ENCODE measurements at regions of chr10 and their contacts with region 1.

Region 1: GRCh38 chr10:43204943-43205671 is 61.8 kb downstream of the RASGEF1A start:
- DNase-seq: no peak
- H3K4me3 ChIP-seq: no peak overlapping the region
- CTCF ChIP-seq: peak; percentile 86

Region 2: GRCh38 chr10:42960491-42960990 is 244.6 kb before region 1 on chr10:
- CTCF ChIA-PET with region 1: no interaction called
- POLR2A ChIA-PET with region 1: no interaction called
- DNase-seq: no peak
- H3K4me3 ChIP-seq: no peak overlapping the region
- CTCF ChIP-seq: no peak

Region 3: GRCh38 chr10:43190775-43191174 is 14.3 kb before region 1 on chr10:
- CTCF ChIA-PET with region 1: interaction called, 83 read pairs
- POLR2A ChIA-PET with region 1: no interaction called
- DNase-seq: no peak
- H3K4me3 ChIP-seq: no peak overlapping the region
- CTCF ChIP-seq: no peak

Region 4: GRCh38 chr10:43225784-43226148 is 20.7 kb after region 1 on chr10:
- CTCF ChIA-PET with region 1: interaction called, 12 read pairs
- POLR2A ChIA-PET with region 1: no interaction called
- DNase-seq: no peak
- H3K4me3 ChIP-seq: no peak overlapping the region
- CTCF ChIP-seq: no peak

Region 5: GRCh38 chr10:43594944-43595589 is 390.0 kb after region 1 on chr10:
- CTCF ChIA-PET with region 1: no interaction called
- POLR2A ChIA-PET with region 1: no interaction called
- DNase-seq: no peak
- H3K4me3 ChIP-seq: peak overlapping the region; percentile 40
- CTCF ChIP-seq: no peak

Region 6: GRCh38 chr10:43734716-43735115 is 529.6 kb after region 1 on chr10:
- CTCF ChIA-PET with region 1: no interaction called
- POLR2A ChIA-PET with region 1: no interaction called
- DNase-seq: peak; percentile 10
- H3K4me3 ChIP-seq: no peak overlapping the region
- CTCF ChIP-seq: no peak

Measured in AG04449 (cell line).